HepG2 (cell line): ENCODE measurements at regions of chr6 and their contacts with region 1.

Region 1: DNA sequence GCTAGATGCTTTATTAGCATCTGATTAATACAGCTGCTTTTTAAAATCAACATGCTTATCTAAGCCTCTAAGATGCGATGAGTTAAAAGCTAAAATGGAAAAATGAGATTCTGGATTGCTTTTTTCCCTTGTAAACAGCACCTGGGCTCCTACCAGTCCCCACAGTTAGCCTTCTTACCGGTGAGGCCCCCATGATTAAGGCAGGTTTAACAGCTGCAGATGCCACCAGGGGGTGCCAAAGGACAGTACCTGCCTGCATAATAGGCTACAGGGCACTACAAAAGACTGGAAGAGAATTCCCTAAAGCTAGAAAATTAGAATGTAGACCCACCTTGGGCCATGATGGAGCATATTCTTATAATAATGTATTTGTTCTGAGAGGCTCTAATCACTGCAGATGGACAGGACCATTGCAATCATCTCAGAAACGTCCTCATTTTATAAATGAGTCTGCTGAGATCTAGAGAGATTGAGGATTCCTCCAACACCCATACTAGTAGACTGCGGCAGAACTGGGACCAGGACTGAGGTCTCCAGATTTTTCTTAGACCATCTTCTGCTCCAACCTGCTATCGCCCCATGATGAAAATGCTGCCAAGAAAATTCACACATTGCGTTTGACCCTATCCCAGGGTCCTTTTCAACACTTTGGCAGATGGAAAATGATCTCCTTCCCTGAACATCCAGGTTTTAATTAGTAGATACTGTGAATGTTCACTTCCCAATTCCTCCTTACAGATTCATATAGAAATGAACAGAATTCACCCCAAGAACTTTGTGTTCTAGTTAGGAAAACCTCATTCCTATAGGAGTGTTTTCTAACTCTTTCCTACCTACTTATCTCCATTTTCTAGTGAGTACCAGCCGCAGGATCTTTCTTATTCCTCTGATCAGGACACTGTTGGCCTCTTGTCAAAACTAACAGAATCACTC is 148.8 kb downstream of the RPS12 start:
- DNase-seq: peak; percentile 79
- ATAC-seq: peak; percentile 99
- H3K4me3 ChIP-seq: no peak overlapping the region
- H3K27ac ChIP-seq: no peak overlapping the region
- H3K4me1 ChIP-seq: peaks cover 41% of the 10 kb centered on the region
- H3K27me3 ChIP-seq: no peaks in the 10 kb centered on the region
- CTCF ChIP-seq: peak; percentile 92
- EP300 ChIP-seq: no peak
- POLR2A ChIP-seq: no peak
- RAD21 ChIP-seq: peak; percentile 94

Region 2: GRCh38 chr6:132919045-132919860 is 43.9 kb before region 1 on chr6:
- CTCF ChIA-PET with region 1: no interaction called
- POLR2A ChIA-PET with region 1: no interaction called
- in situ Hi-C with region 1: no loop called
- intact Hi-C with region 1: no loop called
- DNase-seq: no peak
- ATAC-seq: no peak
- H3K4me3 ChIP-seq: no peak overlapping the region
- H3K27ac ChIP-seq: no peak overlapping the region
- H3K4me1 ChIP-seq: no peaks in the 10 kb centered on the region
- H3K27me3 ChIP-seq: no peaks in the 10 kb centered on the region
- CTCF ChIP-seq: no peak
- EP300 ChIP-seq: no peak
- POLR2A ChIP-seq: no peak
- RAD21 ChIP-seq: no peak

Region 3: DNA sequence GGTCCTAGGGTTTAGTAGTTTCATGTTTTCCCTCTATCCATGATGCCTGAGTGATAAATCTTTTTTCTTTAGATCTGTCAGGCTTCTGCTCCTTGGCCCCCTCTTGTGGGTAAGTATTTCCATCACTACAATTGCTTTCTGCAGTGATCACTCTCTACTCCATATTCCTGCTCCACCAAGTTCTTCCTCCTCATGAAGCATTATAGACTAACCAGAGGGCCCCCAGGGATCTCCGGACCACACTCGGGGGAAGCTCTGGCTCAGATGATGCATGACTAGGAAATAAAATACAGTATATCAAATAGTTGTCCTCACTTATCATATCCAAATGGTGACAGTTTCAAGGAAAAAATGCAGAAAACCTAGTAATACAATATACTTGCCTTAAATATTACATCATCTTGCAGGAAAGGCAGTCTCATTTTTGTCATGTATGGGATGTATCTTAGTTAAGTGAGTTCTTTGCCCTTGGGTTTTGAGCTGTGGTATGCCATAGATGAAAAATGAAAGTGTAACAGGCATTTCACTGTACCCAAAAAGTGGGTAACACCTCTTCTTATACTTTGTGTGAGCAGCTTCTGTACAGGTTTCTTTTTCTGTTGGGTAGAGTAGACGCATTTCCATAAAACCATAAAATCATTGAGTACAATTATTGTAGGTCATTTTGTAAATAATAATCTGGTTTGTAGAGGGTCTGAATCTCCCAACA is 77.0 kb after region 1 on chr6:
- CTCF ChIA-PET with region 1: interaction called, 84 read pairs
- POLR2A ChIA-PET with region 1: interaction called, 4 read pairs
- in situ Hi-C with region 1: loop called (anchors 5 kb)
- intact Hi-C with region 1: loop called (anchors 1 kb)
- DNase-seq: peak; percentile 54
- ATAC-seq: peak; percentile 84
- H3K4me3 ChIP-seq: no peak overlapping the region
- H3K27ac ChIP-seq: no peak overlapping the region
- H3K4me1 ChIP-seq: peaks cover 16% of the 10 kb centered on the region
- H3K27me3 ChIP-seq: no peaks in the 10 kb centered on the region
- CTCF ChIP-seq: peak; percentile 71
- EP300 ChIP-seq: no peak
- POLR2A ChIP-seq: no peak
- RAD21 ChIP-seq: peak; percentile 78

Region 4: DNA sequence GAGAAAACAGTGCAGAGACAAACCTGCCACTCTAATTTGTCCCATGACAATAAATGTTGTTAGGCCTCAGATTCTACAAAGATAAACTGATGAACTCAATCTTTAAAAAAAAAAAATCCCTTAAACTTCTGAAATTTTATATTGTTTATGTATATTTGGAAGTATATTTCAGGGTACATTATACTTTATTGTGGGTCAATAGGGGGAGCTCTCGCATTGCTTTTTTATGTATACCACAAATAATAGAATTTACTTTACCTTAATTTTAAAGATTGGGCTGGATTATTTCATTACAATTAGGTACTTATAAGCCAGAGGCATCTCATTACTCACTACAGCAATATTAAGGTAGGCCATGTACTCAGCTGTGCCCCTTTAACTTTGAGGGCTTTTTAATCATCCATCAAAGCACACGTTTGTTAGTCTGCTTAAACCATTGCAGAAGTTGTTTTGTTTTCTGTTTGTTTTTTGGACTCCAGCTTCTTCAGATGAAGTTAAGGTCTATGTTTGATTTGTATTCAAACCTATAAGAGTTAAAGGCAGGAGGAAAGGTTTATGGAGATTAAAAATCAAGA is 221.7 kb after region 1 on chr6:
- CTCF ChIA-PET with region 1: interaction called, 3 read pairs
- POLR2A ChIA-PET with region 1: no interaction called
- in situ Hi-C with region 1: no loop called
- intact Hi-C with region 1: loop called (anchors 5 kb)
- DNase-seq: no peak
- ATAC-seq: no peak
- H3K4me3 ChIP-seq: no peak overlapping the region
- H3K27ac ChIP-seq: no peak overlapping the region
- H3K4me1 ChIP-seq: no peaks in the 10 kb centered on the region
- H3K27me3 ChIP-seq: no peaks in the 10 kb centered on the region
- CTCF ChIP-seq: peak; percentile 10; the same call in 1 of the 2 replicates
- EP300 ChIP-seq: no peak
- POLR2A ChIP-seq: no peak
- RAD21 ChIP-seq: no peak

Region 5: DNA sequence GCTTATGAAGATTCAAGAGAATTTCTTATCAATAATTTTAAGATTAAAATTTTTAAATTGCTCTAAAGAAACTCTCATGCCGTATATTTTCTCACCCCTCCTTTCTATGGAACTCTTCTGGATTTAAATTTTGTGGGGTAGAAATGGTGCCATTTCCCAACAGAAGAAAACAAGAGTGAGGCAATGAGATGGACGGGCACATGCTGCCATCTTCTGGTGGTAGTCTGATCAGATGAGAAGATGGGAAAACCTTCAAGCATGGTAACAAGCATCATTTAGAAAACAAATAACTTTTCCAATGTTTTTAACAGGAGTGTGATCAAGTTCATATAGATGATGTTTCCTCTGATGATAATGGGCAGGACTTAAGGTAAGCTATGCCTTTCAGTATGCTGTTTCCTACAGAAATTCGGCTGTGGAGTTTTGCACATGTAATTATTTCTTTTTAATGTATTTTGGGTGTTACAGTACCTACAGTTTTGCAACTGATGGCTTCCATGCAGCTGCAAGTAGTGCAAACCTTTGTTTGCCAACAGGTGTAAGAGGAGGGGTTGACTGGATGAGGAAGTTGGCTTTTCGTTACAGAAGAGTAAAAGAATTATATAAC is 549.3 kb after region 1 on chr6:
- CTCF ChIA-PET with region 1: interaction called, 11 read pairs
- POLR2A ChIA-PET with region 1: no interaction called
- in situ Hi-C with region 1: loop called (anchors 10 kb)
- intact Hi-C with region 1: loop called (anchors 1 kb)
- DNase-seq: peak; percentile 46
- ATAC-seq: peak; percentile 80
- H3K4me3 ChIP-seq: no peak overlapping the region
- H3K27ac ChIP-seq: no peak overlapping the region
- H3K4me1 ChIP-seq: no peaks in the 10 kb centered on the region
- H3K27me3 ChIP-seq: peaks cover 0 to 2% of the 10 kb centered on the region in 2 experiments; a peak in 1 of 5 replicates
- CTCF ChIP-seq: peak; percentile 81
- EP300 ChIP-seq: no peak
- POLR2A ChIP-seq: no peak
- RAD21 ChIP-seq: peak; percentile 69